Ovary (tissue), 10 donors: ENCODE measurements at regions of chr11 and their contacts with region 1.

Region 1: GRCh38 chr11:121318848-121319834 is 26.6 kb downstream of the SC5D start:
- DNase-seq: peak in 2 of 5 donors; percentile 22 to 27
- H3K4me3 ChIP-seq: no peak overlapping the region
- H3K27ac ChIP-seq: no peak overlapping the region
- H3K4me1 ChIP-seq: no peaks in the 10 kb centered on the region
- H3K27me3 ChIP-seq: no peaks in the 10 kb centered on the region
- CTCF ChIP-seq: peak; percentile 34 to 68 (median 53)
- EP300 ChIP-seq: no peak
- POLR2A ChIP-seq: no peak

Region 2: DNA sequence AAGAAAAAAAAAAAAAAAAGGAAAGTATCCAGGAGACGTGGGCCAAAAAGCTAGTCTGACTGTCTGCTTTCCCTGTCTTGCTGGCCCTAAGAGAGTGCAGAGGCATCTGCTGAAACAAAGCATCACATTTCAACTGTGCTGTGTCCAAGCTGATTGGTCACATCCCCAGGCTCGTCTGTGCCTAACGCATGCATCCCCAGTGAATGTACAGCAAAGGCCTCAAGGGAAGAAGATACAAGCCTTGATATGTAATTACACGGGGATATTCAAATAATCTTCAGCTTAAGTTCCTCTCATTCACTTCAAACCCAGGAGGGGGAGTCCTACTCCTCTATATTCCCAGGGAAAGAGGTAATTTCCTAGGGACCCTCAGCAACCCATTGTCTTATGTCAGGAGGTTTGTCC is 127.6 kb after region 1 on chr11:
- intact Hi-C with region 1: loop called in 1 of 4 experiments (anchors 10 kb)
- DNase-seq: no peak
- H3K4me3 ChIP-seq: no peak overlapping the region
- H3K27ac ChIP-seq: no peak overlapping the region
- H3K4me1 ChIP-seq: peaks cover 3% of the 10 kb centered on the region
- H3K27me3 ChIP-seq: no peaks in the 10 kb centered on the region
- CTCF ChIP-seq: no peak
- EP300 ChIP-seq: no peak
- POLR2A ChIP-seq: no peak

Region 3: DNA sequence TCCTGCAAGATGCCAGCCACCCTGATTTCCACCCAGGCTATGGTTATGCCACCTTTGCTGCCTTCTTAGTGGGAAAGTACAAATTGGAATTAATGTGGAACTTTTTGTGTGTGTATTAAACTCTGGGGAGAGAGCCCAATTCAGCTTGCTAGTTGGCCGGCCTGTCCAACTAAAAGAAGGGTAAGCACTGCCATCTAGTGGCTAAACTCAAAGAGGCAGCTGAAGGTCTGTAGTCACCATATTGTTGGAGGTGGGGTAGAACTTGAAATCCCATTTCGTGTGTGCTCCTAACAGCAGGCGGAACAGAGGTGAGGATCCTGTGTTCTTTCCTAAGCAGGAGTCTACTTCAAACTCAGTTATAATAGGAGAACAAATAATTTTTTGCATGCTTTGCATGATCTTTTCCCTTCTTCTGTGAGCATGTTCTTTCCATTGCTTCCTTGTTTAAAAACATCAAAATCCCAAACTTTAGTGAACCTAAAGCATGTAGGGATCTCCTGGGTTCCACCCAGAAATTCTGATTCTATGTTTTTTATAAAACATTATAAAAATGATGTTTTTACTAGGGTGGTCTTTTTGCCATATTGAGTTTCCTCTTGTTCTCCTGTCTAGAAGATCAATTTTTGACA is 272.4 kb after region 1 on chr11:
- intact Hi-C with region 1: loop called in 3 of 4 experiments (anchors 2 to 5 kb)
- DNase-seq: peak; percentile 47 to 79 (median 60)
- H3K4me3 ChIP-seq: no peak overlapping the region
- H3K27ac ChIP-seq: no peak overlapping the region
- H3K4me1 ChIP-seq: no peaks in the 10 kb centered on the region
- H3K27me3 ChIP-seq: no peaks in the 10 kb centered on the region
- CTCF ChIP-seq: peak; percentile 29 to 82 (median 77)
- EP300 ChIP-seq: no peak
- POLR2A ChIP-seq: no peak